Naive thymus-derived CD4-positive, alpha-beta T cell (primary cell): ENCODE measurements at regions of chr4 and their contacts with region 1.

Region 1: GRCh38 chr4:99861120-99861905 is 32.9 kb downstream of the LAMTOR3 start:
- DNase-seq: no peak
- ATAC-seq: no peak
- H3K4me3 ChIP-seq: no peak overlapping the region
- H3K4me3 Mint-ChIP-seq: peak overlapping the region in 1 of 10 donors; percentile 44
- H3K27ac ChIP-seq: no peak overlapping the region
- H3K27ac Mint-ChIP-seq: peak overlapping the region in 1 of 9 donors; percentile 69
- H3K4me1 ChIP-seq: peaks cover 0 to 2% of the 10 kb centered on the region in 2 donors
- H3K4me1 Mint-ChIP-seq: peaks cover 4 to 50% (median 11%) of the 10 kb centered on the region in 7 donors
- H3K27me3 ChIP-seq: no peaks in the 10 kb centered on the region
- H3K27me3 Mint-ChIP-seq: no peaks in the 10 kb centered on the region

Region 2: GRCh38 chr4:98092833-98093439 is 1768.4 kb before region 1 on chr4:
- CTCF ChIA-PET with region 1: no interaction called
- POLR2A ChIA-PET with region 1: no interaction called
- intact Hi-C with region 1: no loop called
- DNase-seq: peak in 1 of 9 donors; percentile 1
- ATAC-seq: no peak
- H3K4me3 ChIP-seq: no peak overlapping the region
- H3K4me3 Mint-ChIP-seq: no peak overlapping the region
- H3K27ac ChIP-seq: no peak overlapping the region
- H3K27ac Mint-ChIP-seq: no peak overlapping the region
- H3K4me1 ChIP-seq: no peaks in the 10 kb centered on the region
- H3K4me1 Mint-ChIP-seq: no peaks in the 10 kb centered on the region
- H3K27me3 ChIP-seq: peaks cover 0 to 2% of the 10 kb centered on the region in 2 donors
- H3K27me3 Mint-ChIP-seq: peaks cover 0 to 19% (median 9%) of the 10 kb centered on the region in 5 donors

Region 3: DNA sequence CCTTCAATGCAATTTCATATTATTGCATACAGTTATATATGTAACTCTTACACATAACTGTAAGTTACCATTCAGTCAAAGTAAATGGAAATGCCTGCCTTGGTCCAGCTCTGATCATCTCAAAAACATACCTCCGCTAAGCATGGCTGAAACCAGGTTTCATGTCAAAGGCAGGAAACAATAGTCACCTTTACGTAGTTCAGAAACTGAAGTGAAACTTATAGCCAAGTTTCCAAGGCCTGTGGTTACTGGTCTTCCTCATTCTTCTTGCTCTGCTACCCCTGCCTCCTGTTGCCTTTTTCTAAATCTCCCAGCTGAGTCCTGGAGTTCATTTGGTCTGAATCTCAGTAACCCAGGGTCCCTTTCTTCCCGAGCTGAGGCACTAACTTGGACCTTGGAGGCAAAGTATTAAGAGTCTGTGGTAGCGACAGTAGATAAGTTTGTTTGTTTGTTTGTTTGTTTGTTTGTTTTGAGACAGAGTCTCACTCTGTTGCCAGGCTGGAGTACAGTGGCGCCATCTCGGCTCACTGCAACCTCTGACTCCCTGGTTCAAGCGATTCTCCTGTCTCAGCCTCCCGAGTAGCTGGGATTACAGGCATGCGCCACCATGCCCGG is 13.8 kb before region 1 on chr4:
- CTCF ChIA-PET with region 1: interaction called, 4 read pairs
- POLR2A ChIA-PET with region 1: interaction called, 3 read pairs
- intact Hi-C with region 1: loop called in 1 of 2 experiments (anchors 1 kb)
- DNase-seq: peak in 6 of 9 donors; percentile 13 to 39 (median 26)
- ATAC-seq: peak; percentile 61
- H3K4me3 ChIP-seq: peak overlapping the region; percentile 9
- H3K4me3 Mint-ChIP-seq: peak overlapping the region in 9 of 10 donors; percentile 49 to 85 (median 75)
- H3K27ac ChIP-seq: peak overlapping the region; percentile 70
- H3K27ac Mint-ChIP-seq: peak overlapping the region; percentile 88 to 99 (median 96)
- H3K4me1 ChIP-seq: peaks cover 8 to 27% of the 10 kb centered on the region in 2 donors
- H3K4me1 Mint-ChIP-seq: peaks cover 31 to 75% (median 65%) of the 10 kb centered on the region in 7 donors
- H3K27me3 ChIP-seq: no peaks in the 10 kb centered on the region
- H3K27me3 Mint-ChIP-seq: no peaks in the 10 kb centered on the region

Region 4: DNA sequence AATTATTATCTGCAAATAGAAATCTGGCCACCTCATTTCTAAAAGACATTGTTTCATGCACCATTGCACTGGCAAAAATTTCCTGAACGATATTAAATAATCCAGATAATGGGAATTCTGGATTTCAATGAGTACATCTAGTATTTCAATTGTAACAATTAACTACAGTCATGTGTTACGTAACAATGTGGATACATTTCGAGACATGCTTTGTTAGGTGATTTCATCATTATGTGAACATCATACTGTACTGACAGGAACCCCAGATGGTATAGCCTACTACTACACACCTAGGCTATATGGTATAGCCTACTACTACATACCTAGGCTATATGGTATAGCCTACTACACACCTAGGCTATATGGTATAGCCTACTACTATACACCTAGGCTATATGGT is 18.1 kb after region 1 on chr4:
- CTCF ChIA-PET with region 1: no interaction called
- POLR2A ChIA-PET with region 1: no interaction called
- intact Hi-C with region 1: loop called (anchors 2 kb)
- DNase-seq: no peak
- ATAC-seq: no peak
- H3K4me3 ChIP-seq: no peak overlapping the region
- H3K4me3 Mint-ChIP-seq: no peak overlapping the region
- H3K27ac ChIP-seq: no peak overlapping the region
- H3K27ac Mint-ChIP-seq: no peak overlapping the region
- H3K4me1 ChIP-seq: no peaks in the 10 kb centered on the region
- H3K4me1 Mint-ChIP-seq: peaks cover 0 to 5% (median 0%) of the 10 kb centered on the region in 7 donors
- H3K27me3 ChIP-seq: no peaks in the 10 kb centered on the region
- H3K27me3 Mint-ChIP-seq: no peaks in the 10 kb centered on the region